Esophagus muscularis mucosa (tissue), 4 donors: ENCODE measurements at regions of chr1 and their contacts with region 1.

Region 1: GRCh38 chr1:23496490-23497181 is 12.7 kb upstream of the ASAP3 start:
- DNase-seq: no peak
- H3K4me3 ChIP-seq: no peak overlapping the region
- H3K27ac ChIP-seq: no peak overlapping the region
- H3K4me1 ChIP-seq: peaks cover 0 to 6% (median 5%) of the 10 kb centered on the region in 4 donors
- H3K27me3 ChIP-seq: no peaks in the 10 kb centered on the region
- CTCF ChIP-seq: no peak
- EP300 ChIP-seq: no peak
- POLR2A ChIP-seq: no peak

Region 2: GRCh38 chr1:23083714-23084480 is 412.7 kb before region 1 on chr1:
- intact Hi-C with region 1: no loop called
- DNase-seq: no peak
- H3K4me3 ChIP-seq: no peak overlapping the region
- H3K27ac ChIP-seq: peak overlapping the region in 1 of 4 donors; percentile 18
- H3K4me1 ChIP-seq: peaks cover 5 to 18% (median 14%) of the 10 kb centered on the region in 4 donors
- H3K27me3 ChIP-seq: no peaks in the 10 kb centered on the region
- CTCF ChIP-seq: no peak
- EP300 ChIP-seq: no peak
- POLR2A ChIP-seq: no peak

Region 3: DNA sequence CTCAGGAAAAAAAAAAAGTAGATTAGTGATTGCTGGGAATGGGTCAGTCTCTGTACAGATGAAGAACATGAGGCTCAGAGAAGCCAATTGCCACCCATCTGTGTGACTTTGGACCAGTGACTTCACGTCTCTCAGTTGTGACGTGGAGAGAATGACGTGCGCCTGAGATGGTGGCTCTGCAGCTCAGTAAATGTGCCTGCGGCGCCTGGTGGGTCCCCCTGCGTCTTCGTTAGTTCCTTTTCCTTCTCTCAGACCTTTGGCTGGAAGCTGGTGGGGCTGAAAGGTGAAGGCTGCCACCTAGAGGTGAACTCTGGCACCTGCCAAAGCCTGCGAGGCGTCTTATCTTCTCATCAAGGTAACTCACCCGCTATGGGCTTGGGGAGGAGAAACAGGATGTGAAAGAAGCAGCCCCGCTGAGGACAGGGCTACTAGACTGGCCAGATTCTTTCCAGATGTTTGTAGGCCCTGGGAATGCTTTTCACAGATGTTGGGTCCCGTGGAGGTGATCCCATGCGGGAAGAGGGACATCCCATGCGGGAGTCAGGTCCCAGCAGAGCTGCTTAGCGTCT is 43.1 kb after region 1 on chr1:
- intact Hi-C with region 1: loop called (anchors 1 kb)
- DNase-seq: peak; percentile 98
- H3K4me3 ChIP-seq: peak overlapping the region; percentile 4 to 22 (median 12)
- H3K27ac ChIP-seq: no peak overlapping the region
- H3K4me1 ChIP-seq: peaks cover under 1 to 17% (median 13%) of the 10 kb centered on the region in 4 donors
- H3K27me3 ChIP-seq: no peaks in the 10 kb centered on the region
- CTCF ChIP-seq: peak; percentile 91 to 95 (median 91)
- EP300 ChIP-seq: no peak
- POLR2A ChIP-seq: no peak

Region 4: GRCh38 chr1:23613191-23614031 is 116.8 kb after region 1 on chr1:
- intact Hi-C with region 1: no loop called
- DNase-seq: no peak
- H3K4me3 ChIP-seq: no peak overlapping the region
- H3K27ac ChIP-seq: no peak overlapping the region
- H3K4me1 ChIP-seq: no peaks in the 10 kb centered on the region
- H3K27me3 ChIP-seq: no peaks in the 10 kb centered on the region
- CTCF ChIP-seq: no peak
- EP300 ChIP-seq: no peak
- POLR2A ChIP-seq: no peak